Transverse colon (tissue), 4 donors: ENCODE measurements at regions of chr7 and their contacts with region 1.

Region 1: GRCh38 chr7:50664461-50664922 is 99.3 kb upstream of the DDC start:
- DNase-seq: no peak
- H3K4me3 ChIP-seq: no peak overlapping the region
- H3K27ac ChIP-seq: no peak overlapping the region
- H3K4me1 ChIP-seq: peaks cover 4 to 35% (median 14%) of the 10 kb centered on the region in 4 donors
- H3K27me3 ChIP-seq: no peaks in the 10 kb centered on the region
- CTCF ChIP-seq: no peak
- EP300 ChIP-seq: no peak
- POLR2A ChIP-seq: no peak

Region 2: GRCh38 chr7:50142425-50143017 is 522.0 kb before region 1 on chr7:
- in situ Hi-C with region 1: loop called in 1 of 4 experiments (anchors 25 kb)
- intact Hi-C with region 1: no loop called
- DNase-seq: no peak
- H3K4me3 ChIP-seq: no peak overlapping the region
- H3K27ac ChIP-seq: no peak overlapping the region
- H3K4me1 ChIP-seq: peaks cover 0 to 4% (median 0%) of the 10 kb centered on the region in 4 donors
- H3K27me3 ChIP-seq: no peaks in the 10 kb centered on the region
- CTCF ChIP-seq: peak; percentile 55 to 73 (median 63)
- EP300 ChIP-seq: no peak
- POLR2A ChIP-seq: no peak

Region 3: GRCh38 chr7:50632561-50633413 is 31.7 kb before region 1 on chr7:
- in situ Hi-C with region 1: no loop called
- intact Hi-C with region 1: loop called (anchors 1 kb)
- DNase-seq: peak; percentile 59
- H3K4me3 ChIP-seq: no peak overlapping the region
- H3K27ac ChIP-seq: no peak overlapping the region
- H3K4me1 ChIP-seq: peaks cover 0 to 16% (median 1%) of the 10 kb centered on the region in 4 donors
- H3K27me3 ChIP-seq: no peaks in the 10 kb centered on the region
- CTCF ChIP-seq: peak; percentile 75 to 89 (median 85)
- EP300 ChIP-seq: no peak
- POLR2A ChIP-seq: no peak

Region 4: GRCh38 chr7:50771199-50772002 is 106.9 kb after region 1 on chr7:
- in situ Hi-C with region 1: loop called in 1 of 4 experiments (anchors 25 kb)
- intact Hi-C with region 1: no loop called
- DNase-seq: no peak
- H3K4me3 ChIP-seq: no peak overlapping the region
- H3K27ac ChIP-seq: no peak overlapping the region
- H3K4me1 ChIP-seq: peaks cover 0 to 8% (median 3%) of the 10 kb centered on the region in 4 donors
- H3K27me3 ChIP-seq: no peaks in the 10 kb centered on the region
- CTCF ChIP-seq: no peak
- EP300 ChIP-seq: no peak
- POLR2A ChIP-seq: no peak